PC-3 (cell line): ENCODE measurements at regions of chrX and their contacts with region 1.

Region 1: DNA sequence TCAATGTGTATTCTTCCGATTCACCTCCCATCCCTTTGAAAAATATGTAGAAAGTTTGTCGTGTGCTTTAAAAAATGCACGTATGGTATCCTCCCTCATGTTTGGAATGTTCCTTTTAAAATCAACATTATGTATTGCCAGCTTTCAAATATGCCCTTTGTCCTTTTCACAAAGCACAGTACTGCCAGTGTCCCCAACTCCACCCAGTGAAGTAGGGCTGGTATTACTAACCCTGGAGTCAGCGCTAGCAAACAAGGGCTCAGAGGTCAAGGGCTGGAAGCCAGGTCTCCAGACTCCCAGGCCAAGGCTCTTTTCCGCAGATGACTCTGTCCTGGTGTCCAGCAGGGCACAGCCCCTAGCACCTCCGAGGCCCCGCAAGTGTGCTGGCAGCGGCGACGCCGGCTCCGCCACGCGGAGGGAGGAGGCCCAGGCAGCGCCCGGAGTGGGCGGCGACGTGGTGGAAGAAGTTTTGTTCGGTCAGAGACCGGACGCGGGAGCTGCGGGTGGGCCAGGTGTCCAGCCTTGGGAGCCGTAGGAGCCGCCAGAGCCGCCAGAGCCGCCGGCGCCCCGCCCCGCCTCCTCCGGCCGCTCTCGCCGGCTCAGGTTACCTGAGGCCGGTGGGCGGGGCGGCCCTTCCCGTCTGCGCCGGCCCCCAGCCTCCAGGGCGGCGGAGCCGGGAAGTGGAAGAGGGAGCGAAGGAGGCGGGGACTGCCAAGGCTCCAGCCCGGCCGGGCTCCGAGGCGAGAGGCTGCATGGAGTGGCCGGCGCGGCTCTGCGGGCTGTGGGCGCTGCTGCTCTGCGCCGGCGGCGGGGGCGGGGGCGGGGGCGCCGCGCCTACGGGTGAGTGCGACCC is at the start of gene IL13RA1:
- DNase-seq: peak; percentile 92
- ATAC-seq: peak; percentile 83
- H3K4me3 ChIP-seq: peak within 1 kb of the TSS; percentile 80
- H3K27ac ChIP-seq: peak within 1 kb of the TSS; percentile 95
- H3K4me1 ChIP-seq: peaks cover 66% of the 10 kb centered on the region
- H3K27me3 ChIP-seq: no peaks in the 10 kb centered on the region
- CTCF ChIP-seq: no peak
- total RNA-seq, gene IL13RA1: 33.4 and 33.5 TPM in 2 replicates

Region 2: GRCh38 chrX:118644378-118644777 is 82.7 kb before region 1 on chrX:
- CTCF ChIA-PET with region 1: interaction called, 5 read pairs
- POLR2A ChIA-PET with region 1: no interaction called
- intact Hi-C with region 1: loop called (anchors 1 kb)
- DNase-seq: peak; percentile 60
- ATAC-seq: peak; percentile 97
- H3K4me3 ChIP-seq: no peak overlapping the region
- H3K27ac ChIP-seq: no peak overlapping the region
- H3K4me1 ChIP-seq: no peaks in the 10 kb centered on the region
- H3K27me3 ChIP-seq: no peaks in the 10 kb centered on the region
- CTCF ChIP-seq: peak; percentile 78

Region 3: DNA sequence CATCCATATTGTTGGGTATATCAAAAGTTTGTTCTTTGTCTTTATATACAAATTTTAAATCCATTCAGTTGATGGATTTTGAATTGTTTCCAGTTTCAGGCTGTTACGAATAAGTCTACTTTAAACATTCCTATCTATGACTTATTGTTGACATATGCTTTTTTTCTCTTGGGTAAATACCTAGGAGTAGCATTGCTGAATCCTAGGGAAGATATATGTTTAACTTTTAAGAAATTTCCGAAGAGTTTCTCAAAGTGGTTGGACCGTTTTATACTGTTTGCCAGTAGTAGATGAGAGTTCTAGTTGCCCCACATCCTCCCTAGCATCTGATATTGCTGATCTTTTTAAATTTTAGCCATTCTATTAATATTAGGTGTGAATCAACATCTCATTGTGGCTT is 60.6 kb before region 1 on chrX:
- CTCF ChIA-PET with region 1: no interaction called
- POLR2A ChIA-PET with region 1: interaction called, 5 read pairs
- intact Hi-C with region 1: loop called (anchors 1 kb)
- DNase-seq: peak; percentile 77
- ATAC-seq: peak; percentile 89
- H3K4me3 ChIP-seq: peak overlapping the region; percentile 25; the same call in 1 of the 2 replicates
- H3K27ac ChIP-seq: peak overlapping the region; percentile 72
- H3K4me1 ChIP-seq: peaks cover 16% of the 10 kb centered on the region
- H3K27me3 ChIP-seq: no peaks in the 10 kb centered on the region
- CTCF ChIP-seq: no peak

Region 4: GRCh38 chrX:118795528-118796280 is 68.6 kb after region 1 on chrX:
- CTCF ChIA-PET with region 1: no interaction called
- POLR2A ChIA-PET with region 1: no interaction called
- intact Hi-C with region 1: no loop called
- DNase-seq: no peak
- ATAC-seq: no peak
- H3K4me3 ChIP-seq: no peak overlapping the region
- H3K27ac ChIP-seq: no peak overlapping the region
- H3K4me1 ChIP-seq: no peaks in the 10 kb centered on the region
- H3K27me3 ChIP-seq: no peaks in the 10 kb centered on the region
- CTCF ChIP-seq: no peak

Region 5: DNA sequence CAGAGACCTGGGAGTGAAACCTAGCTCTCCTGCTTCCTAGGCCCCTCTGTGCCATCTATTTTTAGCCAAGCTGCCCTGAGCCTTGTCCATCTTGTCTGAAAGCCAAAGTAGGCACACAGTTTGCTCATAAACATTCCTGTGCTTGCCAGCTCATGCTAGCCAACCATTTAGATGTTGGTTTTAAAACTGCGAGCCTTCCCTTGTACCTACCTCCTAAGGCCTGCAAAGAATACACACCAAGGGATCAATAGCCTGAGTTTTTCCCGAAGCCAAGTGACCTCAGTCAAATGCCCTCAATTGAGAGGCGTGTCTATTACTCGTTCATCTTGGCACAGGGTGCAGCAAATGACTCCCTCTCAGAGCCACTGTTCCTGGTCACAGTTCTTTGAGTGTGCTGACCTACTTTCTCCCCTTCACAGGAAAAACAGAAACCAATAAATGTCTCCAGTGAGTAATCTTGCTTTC is 145.0 kb after region 1 on chrX:
- CTCF ChIA-PET with region 1: no interaction called
- POLR2A ChIA-PET with region 1: no interaction called
- intact Hi-C with region 1: no loop called
- DNase-seq: peak; percentile 77
- ATAC-seq: peak; percentile 86
- H3K4me3 ChIP-seq: 0 out of 2 replicates have a peak overlapping the region, but pooled peaks have one; percentile 19
- H3K27ac ChIP-seq: peak overlapping the region; percentile 86
- H3K4me1 ChIP-seq: peaks cover 19% of the 10 kb centered on the region
- H3K27me3 ChIP-seq: no peaks in the 10 kb centered on the region
- CTCF ChIP-seq: no peak